Caco-2 (cell line): ENCODE measurements at regions of chr13 and their contacts with region 1.

Region 1: DNA sequence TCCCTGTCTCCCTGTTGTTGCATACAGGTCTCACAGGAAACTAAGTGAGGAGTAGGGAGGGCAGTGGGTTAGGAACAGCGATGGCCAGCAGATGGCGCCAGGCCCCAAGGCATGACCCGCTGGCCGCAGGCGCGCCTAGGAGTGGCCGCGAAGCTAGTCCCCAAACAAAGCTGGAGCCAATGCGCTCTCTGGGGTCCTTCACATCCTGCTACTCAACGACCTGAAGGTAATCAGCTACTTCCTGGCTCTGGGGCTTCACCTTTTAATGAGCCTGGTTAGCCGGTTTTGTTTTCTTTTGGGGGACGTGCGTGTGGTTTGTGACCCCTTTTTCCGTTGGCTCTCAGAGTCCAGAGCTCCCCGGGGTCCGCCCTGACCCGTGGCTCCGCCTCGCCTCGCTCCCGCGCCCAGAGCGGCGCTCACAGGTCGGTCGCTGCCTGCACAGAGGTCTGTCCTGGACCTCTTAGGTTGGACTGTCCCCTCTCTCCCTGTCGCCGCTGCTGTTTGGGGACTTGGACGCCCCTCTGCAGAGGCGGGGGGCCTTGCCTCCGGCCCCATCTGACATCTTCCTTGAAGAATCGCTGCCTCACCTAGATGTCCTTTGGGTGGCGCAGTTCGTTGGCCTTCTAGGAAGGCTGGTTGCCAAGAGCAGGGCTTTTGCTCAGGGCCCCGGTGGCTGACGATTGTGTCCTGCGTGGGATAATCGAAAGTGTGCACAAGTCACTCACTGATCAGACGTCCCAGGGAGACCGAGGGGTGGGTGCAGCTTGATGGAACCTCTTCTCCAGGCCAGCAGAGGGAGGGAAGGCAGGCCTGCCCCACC is 62.1 kb upstream of the GTF3A start:
- DNase-seq: peak; percentile 87 to 93
- H3K4me3 ChIP-seq: peak overlapping the region; percentile 44
- H3K4me3 Mint-ChIP-seq: peak overlapping the region; percentile 71
- H3K27ac Mint-ChIP-seq: peak overlapping the region; percentile 28
- H3K4me1 ChIP-seq: peaks cover 4% of the 10 kb centered on the region; the same call in 1 of the 2 replicates
- H3K4me1 Mint-ChIP-seq: peaks cover 18% of the 10 kb centered on the region
- H3K27me3 ChIP-seq: no peaks in the 10 kb centered on the region; the same call in 1 of the 2 replicates
- H3K27me3 Mint-ChIP-seq: no peaks in the 10 kb centered on the region
- CTCF ChIP-seq: peak; percentile 94 to 98

Region 2: GRCh38 chr13:27203854-27204253 is 158.4 kb before region 1 on chr13:
- CTCF ChIA-PET with region 1: no interaction called
- POLR2A ChIA-PET with region 1: no interaction called
- intact Hi-C with region 1: loop called (anchors 10 kb)
- DNase-seq: no peak
- H3K4me3 ChIP-seq: no peak overlapping the region
- H3K4me3 Mint-ChIP-seq: no peak overlapping the region
- H3K27ac Mint-ChIP-seq: no peak overlapping the region
- H3K4me1 ChIP-seq: peaks cover 5% of the 10 kb centered on the region
- H3K4me1 Mint-ChIP-seq: peaks cover 9% of the 10 kb centered on the region
- H3K27me3 ChIP-seq: no peaks in the 10 kb centered on the region
- H3K27me3 Mint-ChIP-seq: peaks cover 7% of the 10 kb centered on the region
- CTCF ChIP-seq: peak in 1 of 2 experiments; percentile 14

Region 3: GRCh38 chr13:27321468-27322431 is 40.5 kb before region 1 on chr13:
- CTCF ChIA-PET with region 1: no interaction called
- POLR2A ChIA-PET with region 1: no interaction called
- intact Hi-C with region 1: no loop called
- DNase-seq: no peak
- H3K4me3 ChIP-seq: no peak overlapping the region
- H3K4me3 Mint-ChIP-seq: no peak overlapping the region
- H3K27ac Mint-ChIP-seq: no peak overlapping the region
- H3K4me1 ChIP-seq: no peaks in the 10 kb centered on the region
- H3K4me1 Mint-ChIP-seq: no peaks in the 10 kb centered on the region
- H3K27me3 ChIP-seq: no peaks in the 10 kb centered on the region
- H3K27me3 Mint-ChIP-seq: peaks cover 11% of the 10 kb centered on the region
- CTCF ChIP-seq: no peak

Region 4: DNA sequence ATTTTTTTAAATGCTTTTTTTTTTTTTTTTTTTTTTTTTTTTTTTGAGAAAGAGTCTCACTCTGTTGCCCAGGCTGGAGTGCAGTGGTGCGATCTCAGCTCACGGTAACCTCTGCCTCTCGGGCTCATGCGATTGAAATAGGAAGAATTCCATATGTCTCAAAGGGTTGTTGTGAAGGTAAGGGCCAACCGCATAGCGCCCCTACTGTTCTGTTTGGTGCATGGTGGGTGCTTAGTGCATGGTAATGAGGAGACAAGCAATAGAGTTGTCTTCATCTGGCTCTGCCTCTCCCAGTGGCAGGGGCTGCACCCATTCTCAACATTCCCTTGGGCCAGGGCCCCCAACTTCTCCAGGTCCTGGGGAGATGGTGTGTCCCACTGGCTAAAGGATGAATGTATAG is 23.0 kb before region 1 on chr13:
- CTCF ChIA-PET with region 1: interaction called, 5 read pairs
- POLR2A ChIA-PET with region 1: no interaction called
- intact Hi-C with region 1: loop called (anchors 2 kb)
- DNase-seq: peak; percentile 64
- H3K4me3 ChIP-seq: no peak overlapping the region
- H3K4me3 Mint-ChIP-seq: no peak overlapping the region
- H3K27ac Mint-ChIP-seq: no peak overlapping the region
- H3K4me1 ChIP-seq: no peaks in the 10 kb centered on the region
- H3K4me1 Mint-ChIP-seq: no peaks in the 10 kb centered on the region
- H3K27me3 ChIP-seq: no peaks in the 10 kb centered on the region; the same call in 1 of the 2 replicates
- H3K27me3 Mint-ChIP-seq: no peaks in the 10 kb centered on the region
- CTCF ChIP-seq: peak in 1 of 2 experiments; percentile 78

Region 5: GRCh38 chr13:27388241-27388640 is 26.0 kb after region 1 on chr13:
- CTCF ChIA-PET with region 1: no interaction called
- POLR2A ChIA-PET with region 1: no interaction called
- intact Hi-C with region 1: no loop called
- DNase-seq: peak; percentile 64 to 73
- H3K4me3 ChIP-seq: no peak overlapping the region
- H3K4me3 Mint-ChIP-seq: no peak overlapping the region
- H3K27ac Mint-ChIP-seq: no peak overlapping the region
- H3K4me1 ChIP-seq: peaks cover 10% of the 10 kb centered on the region; the same call in 1 of the 2 replicates
- H3K4me1 Mint-ChIP-seq: peaks cover 22% of the 10 kb centered on the region
- H3K27me3 ChIP-seq: no peaks in the 10 kb centered on the region
- H3K27me3 Mint-ChIP-seq: no peaks in the 10 kb centered on the region
- CTCF ChIP-seq: no peak

Region 6: GRCh38 chr13:27424246-27425157 is 62.2 kb after region 1 on chr13 and contains the start of gene GTF3A:
- CTCF ChIA-PET with region 1: interaction called, 38 read pairs
- POLR2A ChIA-PET with region 1: interaction called, 3 read pairs
- intact Hi-C with region 1: no loop called
- DNase-seq: peak; percentile 81 to 93
- H3K4me3 ChIP-seq: peak within 1 kb of the TSS; percentile 87
- H3K4me3 Mint-ChIP-seq: peak within 1 kb of the TSS; percentile 87
- H3K27ac Mint-ChIP-seq: peak within 1 kb of the TSS; percentile 88
- H3K4me1 ChIP-seq: peaks cover 8% of the 10 kb centered on the region
- H3K4me1 Mint-ChIP-seq: peaks cover 16% of the 10 kb centered on the region
- H3K27me3 ChIP-seq: no peaks in the 10 kb centered on the region
- H3K27me3 Mint-ChIP-seq: no peaks in the 10 kb centered on the region
- CTCF ChIP-seq: no peak
- total RNA-seq, gene GTF3A: 132 and 141 TPM in 2 replicates

Region 7: GRCh38 chr13:27953676-27954405 is 591.6 kb after region 1 on chr13:
- CTCF ChIA-PET with region 1: interaction called, 21 read pairs
- POLR2A ChIA-PET with region 1: interaction called, 3 read pairs
- intact Hi-C with region 1: no loop called
- DNase-seq: peak; percentile 88 to 96
- H3K4me3 ChIP-seq: peak overlapping the region; percentile 56
- H3K4me3 Mint-ChIP-seq: peak overlapping the region; percentile 88
- H3K27ac Mint-ChIP-seq: peak overlapping the region; percentile 94
- H3K4me1 ChIP-seq: peaks cover 51% of the 10 kb centered on the region
- H3K4me1 Mint-ChIP-seq: peaks cover 13% of the 10 kb centered on the region
- H3K27me3 ChIP-seq: no peaks in the 10 kb centered on the region
- H3K27me3 Mint-ChIP-seq: no peaks in the 10 kb centered on the region
- CTCF ChIP-seq: peak; percentile 79 to 95